Dendritic cell treated with granulocyte-macrophage colony-stimulating factor and Interleukin-4, amounts not matched to agents 40 ng/mL and 50 ng/mL, for 4 days (primary cell): ENCODE measurements at regions of chr6 and their contacts with region 1.

Region 1: DNA sequence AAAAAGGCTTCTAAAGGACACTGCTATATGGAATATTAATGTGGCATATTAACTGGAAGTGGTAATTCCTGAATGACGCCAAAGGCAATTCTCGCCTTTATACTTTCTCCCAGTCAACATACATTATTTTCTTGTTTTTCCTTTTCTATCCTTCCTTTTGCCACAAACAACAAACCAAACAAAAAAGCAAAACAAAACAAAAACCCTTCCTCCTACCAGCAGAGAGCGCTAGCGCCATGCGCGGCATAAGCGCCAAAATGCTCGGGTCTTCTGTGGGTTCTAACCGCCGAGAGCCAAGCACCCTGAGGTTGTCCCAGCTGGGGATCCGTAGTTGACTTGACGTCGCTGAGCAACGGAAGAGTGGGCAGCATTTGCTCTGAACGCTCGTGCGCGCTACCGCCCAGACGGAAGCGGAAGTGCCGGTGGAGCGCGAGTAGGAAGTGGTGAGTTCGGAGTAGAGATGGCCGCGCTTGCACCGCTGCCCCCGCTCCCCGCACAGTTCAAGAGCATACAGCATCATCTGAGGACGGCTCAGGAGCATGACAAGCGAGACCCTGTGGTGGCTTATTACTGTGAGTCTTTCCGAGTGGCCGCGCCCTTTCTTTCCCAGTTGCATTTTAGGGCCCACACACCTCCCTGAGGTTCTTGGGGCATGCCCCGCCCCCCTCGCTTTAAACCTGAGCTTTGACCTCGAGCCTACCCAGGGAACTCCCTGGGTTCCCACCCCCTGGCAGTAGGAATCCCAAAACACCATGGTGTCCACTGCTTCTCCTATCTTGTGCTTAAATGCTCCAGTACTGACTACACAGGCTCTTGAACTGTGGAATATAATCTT is at the starts of genes NMBR and VTA1:
- H3K4me3 Mint-ChIP-seq: peak within 1 kb of the TSS; percentile 96
- H3K27ac Mint-ChIP-seq: peak within 1 kb of the TSS; percentile 87
- H3K4me1 Mint-ChIP-seq: peaks cover 37% of the 10 kb centered on the region
- H3K27me3 Mint-ChIP-seq: peaks cover 1% of the 10 kb centered on the region

Region 2: GRCh38 chr6:142207265-142207877 is 60.3 kb after region 1 on chr6:
- intact Hi-C with region 1: loop called (anchors 10 kb)
- H3K4me3 Mint-ChIP-seq: no peak overlapping the region
- H3K27ac Mint-ChIP-seq: no peak overlapping the region
- H3K4me1 Mint-ChIP-seq: no peaks in the 10 kb centered on the region
- H3K27me3 Mint-ChIP-seq: no peaks in the 10 kb centered on the region

Region 3: GRCh38 chr6:142297996-142298753 is 151.1 kb after region 1 on chr6:
- intact Hi-C with region 1: loop called (anchors 5 kb)
- H3K4me3 Mint-ChIP-seq: no peak overlapping the region
- H3K27ac Mint-ChIP-seq: no peak overlapping the region
- H3K4me1 Mint-ChIP-seq: peaks cover 46% of the 10 kb centered on the region
- H3K27me3 Mint-ChIP-seq: peaks cover 27% of the 10 kb centered on the region

Region 4: GRCh38 chr6:143449714-143450452 is 1302.8 kb after region 1 on chr6:
- intact Hi-C with region 1: loop called (anchors 10 kb)
- H3K4me3 Mint-ChIP-seq: peak overlapping the region; percentile 98
- H3K27ac Mint-ChIP-seq: peak overlapping the region; percentile 94
- H3K4me1 Mint-ChIP-seq: peaks cover 9% of the 10 kb centered on the region
- H3K27me3 Mint-ChIP-seq: no peaks in the 10 kb centered on the region